Activated CD4-positive, alpha-beta T cell treated with anti-CD3 and anti-CD28 coated beads for 36 hours (primary cell): ENCODE measurements at regions of chr2 and their contacts with region 1.

Region 1: GRCh38 chr2:118003396-118003824 is 10.5 kb downstream of the CCDC93 start:
- DNase-seq: peak; percentile 60
- ATAC-seq: peak; percentile 98
- H3K4me3 Mint-ChIP-seq: no peak overlapping the region
- H3K27ac Mint-ChIP-seq: peak overlapping the region; percentile 24
- H3K4me1 Mint-ChIP-seq: peaks cover 17% of the 10 kb centered on the region
- H3K27me3 Mint-ChIP-seq: no peaks in the 10 kb centered on the region

Region 2: GRCh38 chr2:117801826-117802225 is 201.6 kb before region 1 on chr2:
- CTCF ChIA-PET with region 1: no interaction called
- POLR2A ChIA-PET with region 1: no interaction called
- intact Hi-C with region 1: no loop called
- DNase-seq: no peak
- ATAC-seq: no peak
- H3K4me3 Mint-ChIP-seq: no peak overlapping the region
- H3K27ac Mint-ChIP-seq: no peak overlapping the region
- H3K4me1 Mint-ChIP-seq: peaks cover 4% of the 10 kb centered on the region
- H3K27me3 Mint-ChIP-seq: peaks cover 27% of the 10 kb centered on the region

Region 3: GRCh38 chr2:117814417-117815264 is 188.8 kb before region 1 on chr2 and contains the start of gene DDX18:
- CTCF ChIA-PET with region 1: interaction called, 49 read pairs
- POLR2A ChIA-PET with region 1: interaction called, 5 read pairs
- intact Hi-C with region 1: loop called (anchors 1 to 2 kb)
- DNase-seq: peak; percentile 98
- ATAC-seq: peak; percentile 91
- H3K4me3 Mint-ChIP-seq: peak within 1 kb of the TSS; percentile 96
- H3K27ac Mint-ChIP-seq: peak within 1 kb of the TSS; percentile 99
- H3K4me1 Mint-ChIP-seq: peaks cover 41% of the 10 kb centered on the region
- H3K27me3 Mint-ChIP-seq: no peaks in the 10 kb centered on the region
- total RNA-seq, gene DDX18: 161 to 180 TPM

Region 4: DNA sequence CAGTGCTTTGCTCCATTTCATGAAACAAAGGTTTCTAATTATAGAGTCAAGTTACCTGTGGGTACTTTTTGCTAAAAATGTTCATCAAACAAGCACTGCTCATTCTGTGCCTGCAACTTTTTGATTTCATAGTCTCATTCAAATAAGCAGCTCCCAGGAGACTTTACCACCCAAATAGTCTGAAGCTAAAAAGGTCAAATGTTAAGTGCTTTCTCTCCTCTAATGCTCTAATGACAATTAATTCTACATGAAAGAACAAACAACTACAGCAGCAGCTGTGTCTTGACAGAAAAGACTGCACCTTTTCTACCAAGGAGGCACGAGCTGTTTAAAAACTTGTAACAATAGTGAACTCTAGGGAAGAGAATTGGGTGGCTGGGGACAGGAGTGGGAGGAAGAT is 54.8 kb before region 1 on chr2:
- CTCF ChIA-PET with region 1: interaction called, 19 read pairs
- POLR2A ChIA-PET with region 1: no interaction called
- intact Hi-C with region 1: no loop called
- DNase-seq: no peak
- ATAC-seq: no peak
- H3K4me3 Mint-ChIP-seq: no peak overlapping the region
- H3K27ac Mint-ChIP-seq: no peak overlapping the region
- H3K4me1 Mint-ChIP-seq: no peaks in the 10 kb centered on the region
- H3K27me3 Mint-ChIP-seq: no peaks in the 10 kb centered on the region

Region 5: DNA sequence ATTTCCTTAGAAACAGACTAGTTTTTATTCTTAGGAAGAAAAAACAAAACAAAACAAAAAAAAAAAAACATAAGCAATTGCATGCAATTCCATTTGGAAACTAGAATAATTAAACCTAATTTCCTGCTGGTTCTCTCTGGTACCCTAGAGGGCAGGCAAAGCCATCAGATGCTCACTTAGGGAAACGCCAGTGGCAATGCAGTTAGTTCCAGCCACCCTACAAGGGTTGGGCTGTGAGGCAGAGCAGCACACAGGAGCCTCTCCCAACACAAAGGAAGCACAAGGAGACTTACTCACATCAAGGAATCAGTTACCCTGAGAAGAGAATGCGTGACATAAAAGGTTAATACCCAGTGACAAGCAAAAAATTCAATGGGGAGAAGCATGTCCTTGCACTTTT is 18.3 kb before region 1 on chr2:
- CTCF ChIA-PET with region 1: interaction called, 76 read pairs
- POLR2A ChIA-PET with region 1: interaction called, 3 read pairs
- intact Hi-C with region 1: no loop called
- DNase-seq: no peak
- ATAC-seq: no peak
- H3K4me3 Mint-ChIP-seq: no peak overlapping the region
- H3K27ac Mint-ChIP-seq: no peak overlapping the region
- H3K4me1 Mint-ChIP-seq: peaks cover 9% of the 10 kb centered on the region
- H3K27me3 Mint-ChIP-seq: no peaks in the 10 kb centered on the region

Region 6: DNA sequence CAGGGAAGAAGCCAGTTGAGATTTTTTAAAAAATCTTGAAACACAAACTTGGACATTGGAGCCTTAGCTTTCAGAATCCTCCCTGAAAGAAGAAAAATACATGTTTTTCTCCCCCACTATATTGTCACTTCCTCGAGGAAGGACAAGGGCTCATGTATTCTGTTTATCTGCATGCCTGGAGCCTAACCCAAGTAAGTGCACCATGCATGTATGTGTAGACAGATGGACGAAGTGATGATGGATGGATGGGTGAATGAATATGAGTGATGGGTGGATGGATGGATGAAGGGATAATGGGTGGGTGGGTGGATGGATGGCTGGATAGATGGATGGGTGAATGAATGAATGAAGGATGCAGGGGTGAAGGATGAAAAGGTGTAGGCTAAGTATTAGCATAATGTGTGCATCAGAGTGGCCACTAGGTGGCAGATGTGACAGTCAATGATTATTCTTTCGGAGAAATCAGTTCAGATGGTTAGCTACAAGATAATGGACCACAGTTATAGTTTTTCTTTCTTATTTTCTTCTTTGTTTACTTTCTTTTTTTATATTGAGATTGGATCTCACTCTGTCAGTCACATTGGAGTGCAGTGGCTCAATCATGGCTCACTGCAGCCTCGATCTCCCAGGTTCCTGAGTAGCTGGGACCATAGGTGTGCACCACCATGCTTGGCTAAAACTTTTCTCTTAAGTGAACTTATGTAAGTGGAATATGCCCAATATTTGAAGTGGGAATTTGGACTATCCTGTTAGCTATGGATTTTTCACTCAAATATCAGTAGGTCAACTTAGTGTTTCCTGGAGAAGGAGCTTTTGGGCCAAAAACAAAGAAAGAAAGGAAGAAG is 29.0 kb after region 1 on chr2:
- CTCF ChIA-PET with region 1: interaction called, 11 read pairs
- POLR2A ChIA-PET with region 1: no interaction called
- intact Hi-C with region 1: no loop called
- DNase-seq: peak; percentile 65
- ATAC-seq: peak; percentile 83
- H3K4me3 Mint-ChIP-seq: no peak overlapping the region
- H3K27ac Mint-ChIP-seq: no peak overlapping the region
- H3K4me1 Mint-ChIP-seq: no peaks in the 10 kb centered on the region
- H3K27me3 Mint-ChIP-seq: peaks cover 34% of the 10 kb centered on the region